Right cardiac atrium (tissue), 5 donors: ENCODE measurements at regions of chr17 and their contacts with region 1.

Region 1: GRCh38 chr17:79915850-79916430 is 76.7 kb upstream of the CBX4 start:
- DNase-seq: peak in 2 of 3 donors; percentile 69 to 72
- ATAC-seq: peak; percentile 13 to 21
- H3K4me3 ChIP-seq: no peak overlapping the region
- H3K27ac ChIP-seq: no peak overlapping the region
- H3K4me1 ChIP-seq: no peaks in the 10 kb centered on the region
- H3K27me3 ChIP-seq: no peaks in the 10 kb centered on the region

Region 2: DNA sequence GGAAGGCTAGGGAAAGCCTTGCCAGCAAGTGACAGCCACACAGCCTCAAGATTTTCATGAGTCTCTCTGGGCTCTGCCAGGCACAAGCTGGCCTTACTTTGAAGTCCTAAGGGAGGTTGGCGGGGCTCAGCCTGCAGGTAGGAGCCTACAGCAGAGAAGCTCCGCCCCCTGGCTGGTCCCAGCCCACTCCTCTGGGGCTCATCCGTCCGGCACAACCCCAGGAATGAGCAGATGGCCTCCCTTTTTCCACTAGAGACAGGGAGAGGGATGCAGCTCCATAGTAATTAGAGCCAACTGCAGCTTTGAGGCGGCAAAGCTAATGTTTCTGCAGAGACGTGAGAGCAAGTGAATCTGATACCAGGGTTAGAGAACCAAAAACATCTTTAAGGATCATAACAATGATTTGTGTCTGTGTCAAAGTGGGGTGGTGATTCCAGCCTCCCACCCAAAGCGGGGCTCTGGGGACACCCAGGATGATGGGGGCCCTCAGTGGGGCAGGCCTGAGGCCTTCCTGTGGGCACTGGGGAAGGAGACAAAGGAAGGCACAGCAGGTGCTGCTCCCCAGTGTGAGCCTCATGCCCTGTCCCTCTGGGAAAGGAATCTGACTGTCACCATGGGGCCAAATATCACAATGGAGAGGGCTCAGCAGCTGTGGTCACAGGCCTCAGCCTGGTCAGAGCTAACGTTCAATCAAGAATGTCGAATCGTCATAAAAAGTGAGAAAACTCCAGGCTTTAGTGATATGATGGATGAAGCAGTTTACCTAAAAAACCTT is 366.6 kb before region 1 on chr17:
- intact Hi-C with region 1: no loop called
- DNase-seq: no peak
- ATAC-seq: no peak
- H3K4me3 ChIP-seq: no peak overlapping the region
- H3K27ac ChIP-seq: no peak overlapping the region
- H3K4me1 ChIP-seq: no peaks in the 10 kb centered on the region
- H3K27me3 ChIP-seq: no peaks in the 10 kb centered on the region

Region 3: GRCh38 chr17:79789534-79790353 is 126.2 kb before region 1 on chr17:
- intact Hi-C with region 1: loop called in 3 of 4 experiments (anchors 10 kb)
- DNase-seq: peak; percentile 50 to 80 (median 79)
- ATAC-seq: peak; percentile 44 to 72
- H3K4me3 ChIP-seq: no peak overlapping the region
- H3K27ac ChIP-seq: no peak overlapping the region
- H3K4me1 ChIP-seq: no peaks in the 10 kb centered on the region
- H3K27me3 ChIP-seq: no peaks in the 10 kb centered on the region

Region 4: DNA sequence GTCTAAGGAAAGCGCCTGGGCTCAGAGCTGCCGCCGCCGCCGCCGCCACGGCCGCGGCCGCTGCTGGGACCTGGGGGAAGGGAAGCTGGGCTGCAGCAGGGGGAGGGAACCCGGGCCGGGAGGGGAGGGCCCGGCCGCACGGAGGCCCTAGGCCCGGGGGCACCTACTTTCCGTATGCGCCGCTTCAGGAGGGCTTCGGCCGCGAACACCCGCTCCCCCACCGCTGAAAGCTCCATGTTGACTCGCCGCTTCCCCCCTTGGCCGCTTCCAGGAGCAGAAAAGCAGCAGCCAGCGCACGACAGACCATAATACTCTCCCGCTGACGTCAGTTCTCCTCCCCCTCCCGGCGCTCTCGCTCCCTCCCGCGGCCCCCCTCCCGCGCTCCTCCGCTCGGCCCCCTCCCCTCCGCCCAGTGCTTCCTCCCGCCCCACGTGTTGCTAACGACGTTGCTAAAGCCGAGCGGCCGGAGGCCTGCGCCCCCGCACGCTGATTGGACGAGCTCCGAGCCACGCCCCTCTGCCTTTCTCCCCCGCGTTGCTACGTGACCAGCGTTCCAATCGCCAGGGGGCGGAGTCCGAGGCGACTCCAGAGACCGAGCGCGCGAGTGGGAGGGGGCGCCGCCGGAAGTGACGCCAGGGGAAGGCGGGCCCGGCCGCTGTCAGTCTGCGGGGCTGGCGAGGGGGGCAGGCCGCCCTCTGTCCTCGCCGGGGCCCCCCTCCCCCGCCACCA is 119.0 kb before region 1 on chr17 and contains the start of gene CBX8:
- intact Hi-C with region 1: loop called in 1 of 4 experiments (anchors 10 kb)
- DNase-seq: peak; percentile 100
- ATAC-seq: peak; percentile 96 to 97
- H3K4me3 ChIP-seq: peak within 1 kb of the TSS; percentile 74
- H3K27ac ChIP-seq: peak within 1 kb of the TSS; percentile 65
- H3K4me1 ChIP-seq: no peaks in the 10 kb centered on the region
- H3K27me3 ChIP-seq: no peaks in the 10 kb centered on the region
- total RNA-seq, gene CBX8: 2.4 to 7.3 (median 5.5) TPM

Region 5: GRCh38 chr17:79861413-79862216 is 54.3 kb before region 1 on chr17:
- intact Hi-C with region 1: loop called in 1 of 4 experiments (anchors 5 kb)
- DNase-seq: peak in 1 of 3 donors; percentile 12
- ATAC-seq: no peak
- H3K4me3 ChIP-seq: no peak overlapping the region
- H3K27ac ChIP-seq: no peak overlapping the region
- H3K4me1 ChIP-seq: no peaks in the 10 kb centered on the region
- H3K27me3 ChIP-seq: no peaks in the 10 kb centered on the region

Region 6: GRCh38 chr17:79951361-79952264 is 35.7 kb after region 1 on chr17:
- intact Hi-C with region 1: no loop called
- DNase-seq: peak; percentile 53 to 81 (median 77)
- ATAC-seq: peak; percentile 73 to 77
- H3K4me3 ChIP-seq: no peak overlapping the region
- H3K27ac ChIP-seq: no peak overlapping the region
- H3K4me1 ChIP-seq: no peaks in the 10 kb centered on the region
- H3K27me3 ChIP-seq: no peaks in the 10 kb centered on the region